MCF 10A (cell line): ENCODE measurements at regions of chr19 and their contacts with region 1.

Region 1: DNA sequence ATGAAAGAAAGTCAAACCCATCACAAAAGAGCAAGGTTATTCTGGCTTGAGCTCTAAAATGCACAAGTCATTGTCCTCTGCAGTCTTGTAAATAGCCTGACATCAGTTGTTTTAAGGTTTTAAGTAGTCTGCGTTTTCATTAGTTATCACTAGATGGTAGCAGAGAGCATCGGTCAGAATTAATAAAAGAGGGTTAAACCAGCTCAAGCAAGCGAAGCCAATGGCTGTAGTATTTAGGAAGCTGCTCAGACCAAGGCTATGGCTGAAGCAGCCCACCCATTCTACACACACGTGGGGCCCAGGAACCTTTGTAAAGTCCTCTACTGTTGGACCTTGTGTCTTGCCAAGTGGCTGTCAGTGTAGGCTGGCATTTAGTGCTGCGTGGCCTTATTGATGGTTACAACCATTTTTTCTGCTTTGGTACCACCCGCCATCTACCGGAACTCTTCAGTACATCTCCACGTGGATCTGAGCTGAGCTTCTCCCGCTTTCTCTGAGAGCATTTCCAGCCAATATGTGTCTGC is 13.3 kb upstream of the ZNF57 start:
- DNase-seq: peak; percentile 70
- H3K4me3 Mint-ChIP-seq: no peak overlapping the region
- H3K27ac Mint-ChIP-seq: no peak overlapping the region
- H3K4me1 Mint-ChIP-seq: no peaks in the 10 kb centered on the region
- H3K27me3 Mint-ChIP-seq: no peaks in the 10 kb centered on the region
- CTCF ChIP-seq: peak; percentile 61

Region 2: GRCh38 chr19:2648528-2648937 is 238.9 kb before region 1 on chr19:
- CTCF ChIA-PET with region 1: no interaction called
- POLR2A ChIA-PET with region 1: no interaction called
- intact Hi-C with region 1: loop called (anchors 5 kb)
- DNase-seq: peak; percentile 80
- H3K4me3 Mint-ChIP-seq: no peak overlapping the region
- H3K27ac Mint-ChIP-seq: no peak overlapping the region
- H3K4me1 Mint-ChIP-seq: peaks cover 2% of the 10 kb centered on the region
- H3K27me3 Mint-ChIP-seq: peaks cover 30% of the 10 kb centered on the region
- CTCF ChIP-seq: peak; percentile 94

Region 3: DNA sequence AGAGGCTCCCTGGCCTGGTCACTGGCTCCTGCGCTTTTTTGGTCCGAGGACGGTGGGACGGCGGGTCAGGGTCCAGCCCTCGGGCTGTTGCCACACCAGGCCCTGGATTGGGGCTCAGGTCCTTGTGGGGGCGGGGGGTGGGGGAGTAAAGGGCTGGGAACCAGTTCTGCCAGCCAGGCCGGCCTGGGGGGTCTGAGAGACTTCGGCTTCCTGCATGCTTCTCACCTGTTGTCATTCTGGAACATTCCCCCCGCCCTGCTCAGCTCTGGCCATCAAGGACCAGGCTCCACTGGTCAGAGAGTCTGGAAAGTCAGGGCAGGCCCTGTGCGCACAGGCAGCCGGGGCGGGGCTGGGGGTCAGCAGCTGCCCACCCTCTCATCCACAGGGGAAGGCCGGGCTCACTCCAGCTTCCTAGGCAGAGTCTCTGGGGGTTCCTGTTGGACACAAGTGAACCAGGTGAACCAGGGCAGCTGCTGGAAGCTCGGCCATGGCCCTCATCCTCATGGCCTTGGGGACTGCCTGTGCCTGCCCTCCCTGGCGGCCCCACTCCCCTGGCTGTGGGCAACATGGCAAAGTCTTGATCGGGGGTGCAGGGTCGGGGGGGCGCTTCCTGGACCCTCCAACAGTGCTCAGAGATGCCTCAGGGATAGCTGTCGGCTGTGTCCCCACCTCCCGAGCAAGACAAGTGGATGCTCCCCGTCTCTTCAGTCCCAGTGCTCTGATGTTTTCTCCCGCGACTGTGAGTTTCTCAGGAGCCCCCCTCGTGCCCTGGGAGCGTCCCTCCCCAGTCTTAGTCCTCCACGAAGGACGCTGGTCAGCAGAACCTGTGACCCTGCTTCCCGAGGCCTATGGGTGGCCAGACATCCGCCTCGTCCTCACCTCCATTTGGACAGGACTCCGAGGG is 73.6 kb before region 1 on chr19:
- CTCF ChIA-PET with region 1: no interaction called
- POLR2A ChIA-PET with region 1: no interaction called
- intact Hi-C with region 1: no loop called
- DNase-seq: no peak
- H3K4me3 Mint-ChIP-seq: no peak overlapping the region
- H3K27ac Mint-ChIP-seq: no peak overlapping the region
- H3K4me1 Mint-ChIP-seq: peaks cover 4% of the 10 kb centered on the region
- H3K27me3 Mint-ChIP-seq: no peaks in the 10 kb centered on the region
- CTCF ChIP-seq: no peak

Region 4: DNA sequence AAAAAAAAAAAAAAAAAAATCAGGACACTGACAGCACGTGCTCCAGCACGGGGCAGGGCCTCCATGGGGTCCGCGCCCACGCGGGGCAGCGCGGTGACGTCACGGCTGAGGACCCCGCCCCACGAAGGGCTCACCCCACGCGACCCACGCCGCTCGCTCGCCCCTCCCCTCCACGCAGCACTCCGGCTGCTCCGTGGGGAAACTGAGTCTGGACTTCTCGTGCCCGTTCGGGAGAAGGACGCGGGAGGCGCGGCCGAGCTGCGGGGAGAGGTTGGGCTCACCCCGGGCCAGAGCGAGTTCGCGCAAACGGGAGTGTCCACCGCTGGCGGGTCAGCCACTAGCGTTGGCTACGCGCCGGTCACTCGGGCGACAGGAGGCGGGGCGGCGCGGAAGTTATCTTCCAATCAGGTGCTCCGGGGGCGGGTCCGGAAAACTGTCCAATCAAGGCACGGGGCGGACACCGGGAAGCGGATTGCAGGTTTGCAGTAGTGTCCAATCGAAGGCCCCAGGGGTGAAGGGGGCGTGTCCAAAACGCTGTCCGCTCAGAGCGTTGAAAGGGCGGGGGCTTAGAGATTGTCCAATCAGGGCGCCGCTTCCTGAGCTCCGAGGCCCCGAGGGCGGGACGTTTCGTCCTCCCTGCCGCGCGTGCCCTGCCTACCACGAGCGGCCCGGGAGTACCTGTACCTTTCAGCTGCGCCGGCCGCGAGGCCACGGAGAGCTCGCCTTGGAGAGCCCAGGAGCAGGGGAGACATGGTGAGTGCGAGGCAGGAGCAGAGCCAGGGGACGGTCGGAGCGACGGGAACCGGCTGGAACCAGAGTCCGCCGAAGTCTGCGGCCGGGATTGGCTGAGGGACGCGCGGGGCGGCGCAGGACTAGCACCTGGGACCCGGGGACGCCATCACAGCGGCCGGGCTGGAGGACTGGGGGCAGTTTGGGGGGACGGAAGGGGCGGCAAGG is 13.1 kb after region 1 on chr19 and contains the start of gene ZNF57:
- CTCF ChIA-PET with region 1: interaction called, 4 read pairs
- POLR2A ChIA-PET with region 1: interaction called, 16 read pairs
- intact Hi-C with region 1: no loop called
- DNase-seq: peak; percentile 100
- H3K4me3 Mint-ChIP-seq: peak within 1 kb of the TSS; percentile 94
- H3K27ac Mint-ChIP-seq: peak within 1 kb of the TSS; percentile 94
- H3K4me1 Mint-ChIP-seq: peaks cover 19% of the 10 kb centered on the region
- H3K27me3 Mint-ChIP-seq: no peaks in the 10 kb centered on the region
- CTCF ChIP-seq: no peak
- total RNA-seq, gene ZNF57: 4.8 and 5.5 TPM in 2 replicates

Region 5: DNA sequence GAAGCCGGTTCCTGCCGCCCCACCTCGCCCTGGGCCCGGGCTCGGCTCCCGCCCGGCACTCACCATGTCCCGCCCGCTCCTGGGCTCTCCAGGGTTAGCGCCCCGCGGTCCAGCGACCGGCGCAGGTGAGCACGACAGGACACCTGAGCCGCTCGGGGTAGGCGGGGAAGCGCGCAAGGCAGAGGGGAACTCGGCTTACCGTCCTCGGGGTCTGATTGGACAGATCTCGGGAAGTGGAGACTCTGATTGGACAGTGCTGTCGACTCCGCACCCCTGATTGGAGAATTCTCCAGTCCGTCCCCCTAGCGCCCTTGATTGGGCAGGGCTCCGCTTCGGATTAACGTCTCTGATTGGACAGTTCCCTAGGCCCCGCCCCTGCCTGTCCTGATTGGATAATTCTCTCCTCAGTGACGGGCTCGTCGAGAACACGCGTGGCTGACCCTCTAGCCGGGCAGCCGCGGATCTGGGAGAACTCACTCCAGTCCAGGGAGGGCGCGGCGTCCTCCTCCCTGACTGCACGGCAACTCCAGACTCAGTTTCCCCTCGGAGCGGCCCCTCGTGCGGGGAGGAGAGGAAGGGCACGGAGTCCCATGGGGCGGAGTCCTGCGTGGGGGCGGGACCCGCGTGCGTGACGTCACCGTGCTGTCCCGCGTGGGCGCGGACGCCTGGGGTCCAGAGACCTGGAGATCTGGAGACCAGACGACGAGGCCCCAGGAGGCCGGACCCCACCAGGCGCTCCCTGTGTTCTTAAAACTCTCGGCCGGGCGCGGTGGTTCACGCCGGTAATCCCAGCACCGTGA is 57.5 kb after region 1 on chr19 and contains the start of gene ZNF77:
- CTCF ChIA-PET with region 1: interaction called, 41 read pairs
- POLR2A ChIA-PET with region 1: interaction called, 30 read pairs
- intact Hi-C with region 1: loop called (anchors 1 kb)
- DNase-seq: peak; percentile 100
- H3K4me3 Mint-ChIP-seq: peak within 1 kb of the TSS; percentile 96
- H3K27ac Mint-ChIP-seq: peak within 1 kb of the TSS; percentile 93
- H3K4me1 Mint-ChIP-seq: peaks cover 7% of the 10 kb centered on the region
- H3K27me3 Mint-ChIP-seq: no peaks in the 10 kb centered on the region
- CTCF ChIP-seq: no peak
- total RNA-seq, gene ZNF77: 4.7 and 4.9 TPM in 2 replicates

Region 6: GRCh38 chr19:3142292-3142670 is 254.8 kb after region 1 on chr19:
- CTCF ChIA-PET with region 1: no interaction called
- POLR2A ChIA-PET with region 1: no interaction called
- intact Hi-C with region 1: no loop called
- DNase-seq: peak; percentile 93
- H3K4me3 Mint-ChIP-seq: peak overlapping the region; percentile 63
- H3K27ac Mint-ChIP-seq: peak overlapping the region; percentile 97
- H3K4me1 Mint-ChIP-seq: peaks cover 21% of the 10 kb centered on the region
- H3K27me3 Mint-ChIP-seq: no peaks in the 10 kb centered on the region
- CTCF ChIP-seq: no peak